Aorta (tissue), 5 donors: ENCODE measurements at regions of chr5 and their contacts with region 1.

Region 1: DNA sequence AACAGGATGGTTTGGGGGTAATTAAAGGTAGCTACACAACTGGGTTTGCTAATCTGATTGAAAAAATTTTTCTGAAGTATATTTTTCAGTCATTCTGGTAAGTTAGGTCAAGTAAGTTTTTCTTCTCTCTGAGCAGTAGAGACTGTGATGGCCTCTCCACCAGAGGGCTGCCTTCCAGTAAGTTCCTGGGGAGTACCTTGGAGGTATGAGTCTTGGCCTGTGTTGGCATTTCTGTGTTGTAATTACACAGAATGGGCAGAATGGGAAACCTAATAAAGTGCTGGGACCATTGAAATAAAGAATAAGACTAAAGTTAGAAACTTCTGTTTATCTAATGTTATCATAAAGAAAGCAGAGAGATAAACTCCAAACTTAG is 430.8 kb downstream of the ARHGEF28 start:
- DNase-seq: no peak
- ATAC-seq: no peak
- H3K4me3 ChIP-seq: no peak overlapping the region
- H3K27ac ChIP-seq: no peak overlapping the region
- H3K4me1 ChIP-seq: peaks cover 0 to 2% of the 10 kb centered on the region in 2 donors
- H3K27me3 ChIP-seq: no peaks in the 10 kb centered on the region

Region 2: GRCh38 chr5:73851471-73852181 is 205.2 kb before region 1 on chr5:
- intact Hi-C with region 1: no loop called
- DNase-seq: no peak
- ATAC-seq: no peak
- H3K4me3 ChIP-seq: no peak overlapping the region
- H3K27ac ChIP-seq: no peak overlapping the region
- H3K4me1 ChIP-seq: no peaks in the 10 kb centered on the region
- H3K27me3 ChIP-seq: no peaks in the 10 kb centered on the region

Region 3: GRCh38 chr5:73938280-73938937 is 118.4 kb before region 1 on chr5:
- intact Hi-C with region 1: no loop called
- DNase-seq: no peak
- ATAC-seq: no peak
- H3K4me3 ChIP-seq: no peak overlapping the region
- H3K27ac ChIP-seq: peak overlapping the region in 1 of 2 donors; percentile 79
- H3K4me1 ChIP-seq: peaks cover 0 to 5% of the 10 kb centered on the region in 2 donors
- H3K27me3 ChIP-seq: no peaks in the 10 kb centered on the region

Region 4: DNA sequence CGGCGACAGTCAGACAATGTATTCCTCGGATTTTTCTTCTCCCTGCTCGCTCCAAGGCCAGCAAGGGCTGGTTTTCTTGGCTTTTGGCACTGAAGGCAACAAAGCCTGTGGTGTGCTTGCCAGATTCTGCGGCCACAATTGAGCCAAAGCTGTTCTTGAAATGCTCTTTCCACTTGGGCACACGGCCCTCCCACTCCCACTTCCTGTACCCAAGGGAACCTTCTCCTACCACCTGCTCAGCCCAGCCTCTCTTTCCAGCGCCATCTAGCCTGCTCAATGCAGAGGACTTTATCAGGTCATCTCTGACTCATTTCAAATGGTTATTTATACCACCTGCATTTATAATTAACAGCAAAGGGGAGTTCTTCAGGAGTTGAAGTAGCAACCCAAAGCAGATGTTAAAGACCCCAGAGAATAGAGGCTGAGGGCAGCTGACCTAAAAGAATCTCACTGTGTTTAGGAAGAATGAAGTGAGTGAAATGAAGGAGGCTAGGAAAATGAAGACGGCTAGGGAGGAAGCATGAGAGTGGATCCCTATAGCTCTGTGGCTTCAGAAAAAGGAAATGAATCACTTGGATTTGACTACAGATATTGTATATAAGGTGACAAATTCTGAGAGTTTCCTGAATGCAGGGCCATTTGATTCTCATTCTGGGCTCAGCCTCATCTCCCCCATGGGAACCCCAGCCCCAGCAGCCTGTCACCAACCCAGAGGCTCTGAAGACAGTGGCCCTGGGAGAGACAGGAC is 144.7 kb after region 1 on chr5:
- intact Hi-C with region 1: loop called (anchors 10 kb)
- DNase-seq: peak in 1 of 2 donors; percentile 61
- ATAC-seq: no peak
- H3K4me3 ChIP-seq: no peak overlapping the region
- H3K27ac ChIP-seq: peak overlapping the region in 1 of 2 donors; percentile 14
- H3K4me1 ChIP-seq: peaks cover 4 to 10% of the 10 kb centered on the region in 2 donors
- H3K27me3 ChIP-seq: no peaks in the 10 kb centered on the region